Activated CD4-positive, alpha-beta memory T cell treated with anti-CD3 and anti-CD28 coated beads, Interleukin-2, amount 10 ng/mL, durations not matched to agents 7 days and 5 days (primary cell): ENCODE measurements at regions of chr6 and their contacts with region 1.

Region 1: DNA sequence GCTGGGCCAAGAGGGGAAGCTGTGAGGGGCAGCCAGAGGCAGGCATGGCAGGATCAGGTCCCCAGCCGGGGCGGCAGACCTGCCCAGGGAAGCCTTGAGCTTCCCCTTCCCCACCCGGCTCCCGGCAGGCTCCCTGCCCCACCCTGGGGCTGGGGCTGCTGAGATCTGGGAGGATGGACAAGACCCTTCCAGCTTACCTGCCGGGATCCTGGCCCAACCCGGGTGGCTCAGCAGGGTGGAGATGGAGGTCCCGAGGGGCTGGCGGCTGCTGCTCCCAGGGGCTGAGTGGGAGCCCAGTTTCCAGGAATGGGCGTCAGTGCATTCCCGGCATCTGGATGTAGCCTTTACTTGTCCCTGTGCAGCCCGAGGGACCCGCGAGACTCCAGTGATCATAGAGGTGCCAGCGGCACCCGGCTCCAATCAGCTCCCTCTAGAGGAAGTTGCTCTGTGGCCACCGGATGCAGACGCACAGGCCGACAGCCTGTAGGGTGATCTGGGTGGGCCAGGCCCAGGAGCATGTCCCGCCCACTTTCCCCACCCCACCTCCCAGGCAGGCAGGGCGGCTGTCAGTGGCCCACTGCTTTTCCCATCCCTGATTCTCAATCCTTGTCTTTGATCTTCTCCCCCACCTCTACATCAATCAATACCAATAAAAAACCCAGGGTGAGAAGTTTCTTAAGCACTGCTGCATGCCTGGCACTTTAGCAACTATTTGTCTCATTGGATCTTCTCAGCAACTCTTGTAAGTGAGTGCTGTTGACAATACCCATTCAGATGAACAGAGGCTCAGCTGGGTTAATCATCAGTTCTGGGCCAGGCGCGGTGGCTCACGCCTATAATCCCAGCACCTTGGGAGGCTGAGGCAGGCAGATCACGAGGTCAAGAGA is at the start of gene BAK1:
- DNase-seq: peak; percentile 90
- H3K4me3 Mint-ChIP-seq: peak within 1 kb of the TSS; percentile 94
- H3K27ac Mint-ChIP-seq: peak within 1 kb of the TSS; percentile 96
- H3K4me1 Mint-ChIP-seq: peaks cover 45% of the 10 kb centered on the region
- H3K27me3 Mint-ChIP-seq: no peaks in the 10 kb centered on the region
- total RNA-seq, gene BAK1: 97.9 to 100 TPM

Region 2: DNA sequence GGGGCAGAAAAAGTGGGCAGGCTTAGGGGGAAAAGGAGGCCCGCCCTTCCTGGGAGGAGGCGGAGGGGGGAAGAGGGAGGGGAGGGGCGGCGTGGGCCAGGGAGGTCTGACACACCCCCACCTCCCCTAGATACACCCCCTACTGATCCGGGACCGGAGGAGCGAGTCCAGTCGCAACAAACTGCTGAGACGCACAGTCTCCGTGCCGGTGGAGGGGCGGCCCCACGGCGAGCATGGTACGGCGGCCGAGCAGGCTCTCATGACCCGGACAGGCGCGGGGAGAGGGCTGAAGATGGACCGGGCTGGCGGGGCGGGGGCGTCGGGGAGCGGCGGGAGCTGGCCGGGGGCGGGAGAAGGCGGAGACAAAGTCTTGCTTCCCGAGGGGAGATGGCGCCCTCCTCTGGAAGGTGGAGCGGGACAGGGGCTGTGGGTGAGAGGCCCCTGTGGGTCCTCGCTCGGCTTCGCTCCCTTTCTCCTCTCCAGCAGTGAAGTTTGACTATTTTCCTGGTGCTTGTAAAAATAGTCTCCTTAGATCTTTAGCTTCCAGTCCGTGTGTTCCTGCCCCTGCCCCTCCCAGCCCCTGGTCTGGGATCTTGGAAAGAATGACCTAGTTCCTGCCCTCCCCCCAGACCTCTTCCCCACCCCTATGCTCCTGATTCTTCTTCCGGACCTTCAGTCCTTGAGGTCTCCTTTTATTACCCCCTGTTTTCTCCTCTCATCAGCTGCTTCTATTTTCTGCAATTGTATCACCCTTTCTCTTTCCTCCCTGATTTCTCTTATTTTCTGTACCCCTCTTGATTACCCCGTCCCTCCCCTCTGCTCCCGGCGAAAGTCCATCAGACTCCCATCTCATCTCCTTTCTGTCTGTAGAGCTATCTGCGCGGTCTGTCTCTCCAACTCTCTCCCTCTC is 154.1 kb before region 1 on chr6:
- CTCF ChIA-PET with region 1: interaction called, 5 read pairs
- POLR2A ChIA-PET with region 1: interaction called, 19 read pairs
- DNase-seq: peak; percentile 85
- H3K4me3 Mint-ChIP-seq: peak overlapping the region; percentile 98
- H3K27ac Mint-ChIP-seq: peak overlapping the region; percentile 93
- H3K4me1 Mint-ChIP-seq: peaks cover 75% of the 10 kb centered on the region
- H3K27me3 Mint-ChIP-seq: peaks cover 15% of the 10 kb centered on the region

Region 3: DNA sequence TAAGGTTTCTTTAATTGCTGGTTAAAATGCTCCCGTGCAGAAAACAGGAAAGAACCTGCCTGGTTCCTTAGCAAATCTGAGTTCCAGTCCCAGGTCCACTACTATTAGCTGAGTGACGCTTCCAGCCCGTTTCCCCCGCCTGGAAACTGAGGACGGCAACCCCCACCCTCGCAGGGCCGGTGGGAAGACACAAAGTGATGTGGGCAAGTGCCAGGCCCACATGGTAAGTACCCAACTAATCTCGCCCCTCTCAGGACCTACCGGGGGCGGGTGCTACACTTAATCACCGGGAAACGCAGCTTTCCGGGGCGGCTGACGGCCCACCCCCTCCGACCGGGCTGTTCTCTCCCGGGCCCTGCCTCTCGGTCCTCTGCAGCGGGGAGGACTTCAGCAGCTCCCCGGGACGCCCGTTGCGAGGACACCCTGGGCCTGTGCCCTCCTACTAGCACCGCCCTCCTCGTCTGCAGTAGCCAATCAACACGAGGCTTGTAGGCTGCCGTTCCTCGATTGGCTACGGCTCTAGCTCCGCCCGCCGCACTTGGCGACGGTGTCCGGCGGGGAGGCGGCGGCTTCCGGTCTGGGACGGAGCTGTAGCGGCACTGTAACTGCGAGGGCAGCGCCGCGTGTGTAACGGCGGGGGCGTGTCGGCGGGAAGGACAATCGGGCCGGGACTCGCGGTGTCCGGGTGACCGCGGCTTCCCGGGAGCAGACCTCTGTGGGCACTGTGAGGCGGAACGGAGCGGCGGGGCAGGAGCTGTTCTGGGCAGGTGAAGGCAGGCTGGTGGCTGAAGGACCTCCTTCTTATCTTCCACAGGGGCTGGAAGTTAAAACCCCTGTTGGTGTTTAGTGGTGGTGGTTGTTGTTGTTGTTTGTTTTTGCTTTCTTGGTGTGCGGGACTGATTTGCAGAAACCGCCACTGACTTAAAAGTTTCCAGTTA is 125.8 kb before region 1 on chr6 and contains the start of gene ZBTB9:
- CTCF ChIA-PET with region 1: interaction called, 23 read pairs
- POLR2A ChIA-PET with region 1: interaction called, 18 read pairs
- DNase-seq: peak; percentile 96
- H3K4me3 Mint-ChIP-seq: peak within 1 kb of the TSS; percentile 83
- H3K27ac Mint-ChIP-seq: peak within 1 kb of the TSS; percentile 79
- H3K4me1 Mint-ChIP-seq: peaks cover 25% of the 10 kb centered on the region
- H3K27me3 Mint-ChIP-seq: no peaks in the 10 kb centered on the region
- total RNA-seq, gene ZBTB9: 6.9 to 7.4 TPM

Region 4: DNA sequence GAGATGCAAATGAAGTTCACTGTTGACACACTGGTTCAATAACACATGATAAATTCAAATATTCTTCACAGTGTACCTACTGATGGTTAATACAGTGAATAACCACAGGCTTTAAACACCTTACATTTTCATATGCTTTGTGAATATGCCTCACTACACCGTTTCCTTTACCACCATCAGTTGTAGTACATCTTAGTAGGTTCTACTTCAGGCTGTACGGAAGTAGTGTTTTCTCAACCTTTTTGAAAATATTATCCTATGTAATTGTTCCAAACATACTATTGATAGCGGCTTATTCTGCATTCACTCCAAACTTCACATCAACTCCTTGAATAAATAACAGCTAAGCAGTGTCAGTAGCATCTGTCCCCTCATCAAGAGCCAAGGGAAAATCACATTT is 110.4 kb before region 1 on chr6:
- CTCF ChIA-PET with region 1: no interaction called
- POLR2A ChIA-PET with region 1: no interaction called
- DNase-seq: no peak
- H3K4me3 Mint-ChIP-seq: no peak overlapping the region
- H3K27ac Mint-ChIP-seq: no peak overlapping the region
- H3K4me1 Mint-ChIP-seq: no peaks in the 10 kb centered on the region
- H3K27me3 Mint-ChIP-seq: peaks cover 7% of the 10 kb centered on the region

Region 5: GRCh38 chr6:33502486-33502885 is 77.6 kb before region 1 on chr6:
- CTCF ChIA-PET with region 1: no interaction called
- POLR2A ChIA-PET with region 1: no interaction called
- DNase-seq: no peak
- H3K4me3 Mint-ChIP-seq: no peak overlapping the region
- H3K27ac Mint-ChIP-seq: no peak overlapping the region
- H3K4me1 Mint-ChIP-seq: no peaks in the 10 kb centered on the region
- H3K27me3 Mint-ChIP-seq: peaks cover 12% of the 10 kb centered on the region

Region 6: DNA sequence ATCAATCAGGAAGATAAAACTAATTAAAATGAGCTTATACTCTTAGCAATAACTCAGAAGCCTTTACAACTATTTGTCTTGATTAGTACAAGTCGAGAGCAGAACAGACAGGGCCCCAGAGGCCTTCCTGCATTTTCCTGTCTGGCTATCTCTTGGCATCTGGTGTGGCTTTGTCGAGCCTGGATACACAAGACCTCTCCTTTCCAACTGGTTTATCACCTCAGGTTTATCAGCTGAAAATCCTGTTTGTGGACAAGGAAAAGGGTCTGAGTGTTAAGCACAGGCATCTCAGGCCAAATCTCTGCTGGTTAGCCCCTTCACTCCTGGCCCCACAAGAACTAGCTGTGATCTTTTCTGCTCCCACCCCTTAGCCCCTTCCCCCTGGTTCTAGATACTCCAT is 32.6 kb before region 1 on chr6:
- CTCF ChIA-PET with region 1: interaction called, 5 read pairs
- POLR2A ChIA-PET with region 1: interaction called, 15 read pairs
- DNase-seq: no peak
- H3K4me3 Mint-ChIP-seq: no peak overlapping the region
- H3K27ac Mint-ChIP-seq: peak overlapping the region; percentile 72
- H3K4me1 Mint-ChIP-seq: peaks cover 21% of the 10 kb centered on the region
- H3K27me3 Mint-ChIP-seq: no peaks in the 10 kb centered on the region

Region 7: DNA sequence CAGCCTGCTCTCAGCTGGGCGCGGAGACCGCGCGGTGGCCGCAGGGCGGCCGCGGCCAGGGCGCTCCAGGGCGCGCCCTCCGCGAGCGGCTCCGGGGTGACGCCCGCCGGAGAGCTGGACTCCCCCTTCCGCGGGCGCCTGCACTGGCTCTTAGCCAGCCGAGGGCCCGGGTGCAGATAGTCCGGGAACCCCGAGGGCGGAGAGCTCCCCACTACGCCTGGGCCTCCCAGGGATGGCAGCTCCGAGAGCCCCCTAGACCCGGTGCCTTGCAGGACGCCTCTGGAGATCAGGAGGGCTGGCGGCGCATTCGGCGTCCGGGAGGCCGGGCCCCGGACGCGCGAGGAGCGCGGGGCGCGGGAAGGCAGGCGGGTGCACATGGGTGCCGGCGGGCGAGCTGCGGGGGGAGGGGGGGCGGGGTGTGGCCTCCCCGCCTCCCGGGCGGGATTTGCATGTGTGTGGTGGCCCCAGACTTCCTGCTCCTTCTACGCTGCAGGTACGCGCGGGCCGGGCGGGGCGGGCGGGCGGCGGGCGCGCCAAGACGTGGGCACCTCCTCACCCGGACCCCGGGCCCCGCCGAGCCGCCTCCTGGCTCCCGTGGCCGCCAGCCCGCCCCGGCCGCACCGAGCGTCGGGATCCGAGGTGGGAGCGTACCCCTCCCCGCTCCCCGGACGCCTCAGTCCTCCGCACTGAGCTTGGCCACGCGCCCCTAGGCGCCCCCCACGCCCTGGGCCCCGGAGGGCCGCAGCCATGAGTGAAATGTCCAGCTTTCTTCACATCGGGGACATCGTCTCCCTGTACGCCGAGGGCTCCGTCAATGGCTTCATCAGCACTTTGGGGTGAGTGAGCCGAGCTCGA is 41.0 kb after region 1 on chr6 and contains the start of gene ITPR3:
- CTCF ChIA-PET with region 1: interaction called, 5 read pairs
- POLR2A ChIA-PET with region 1: interaction called, 26 read pairs
- DNase-seq: peak; percentile 84
- H3K4me3 Mint-ChIP-seq: peak within 1 kb of the TSS; percentile 94
- H3K27ac Mint-ChIP-seq: peak within 1 kb of the TSS; percentile 93
- H3K4me1 Mint-ChIP-seq: peaks cover 58% of the 10 kb centered on the region
- H3K27me3 Mint-ChIP-seq: no peaks in the 10 kb centered on the region
- total RNA-seq, gene ITPR3: 54.2 to 55.1 TPM

Region 8: DNA sequence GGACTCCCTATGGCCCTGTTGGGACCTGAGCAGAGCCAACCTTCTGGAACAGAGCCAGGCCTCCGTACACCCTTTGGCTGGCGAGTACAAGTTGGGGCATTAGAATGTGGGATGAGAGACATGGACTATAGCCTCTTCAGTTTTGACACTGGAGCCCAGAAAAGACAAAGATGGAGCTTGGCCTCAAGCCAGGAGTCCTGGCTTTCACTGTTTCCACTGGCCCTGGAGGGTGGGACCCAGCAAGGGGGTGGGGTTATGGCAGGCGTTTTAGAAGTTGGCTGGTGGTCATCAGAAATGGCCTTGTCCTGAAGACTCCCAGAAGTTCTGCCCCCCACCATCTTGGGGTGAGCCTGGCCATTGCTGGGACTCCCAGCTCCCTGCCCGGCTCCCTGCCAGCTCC is 62.8 kb after region 1 on chr6:
- CTCF ChIA-PET with region 1: no interaction called
- POLR2A ChIA-PET with region 1: no interaction called
- DNase-seq: no peak
- H3K4me3 Mint-ChIP-seq: no peak overlapping the region
- H3K27ac Mint-ChIP-seq: no peak overlapping the region
- H3K4me1 Mint-ChIP-seq: peaks cover 29% of the 10 kb centered on the region
- H3K27me3 Mint-ChIP-seq: no peaks in the 10 kb centered on the region